ENCODE measurements at regions of chr5 and their contacts with region 1.

Region 1: DNA sequence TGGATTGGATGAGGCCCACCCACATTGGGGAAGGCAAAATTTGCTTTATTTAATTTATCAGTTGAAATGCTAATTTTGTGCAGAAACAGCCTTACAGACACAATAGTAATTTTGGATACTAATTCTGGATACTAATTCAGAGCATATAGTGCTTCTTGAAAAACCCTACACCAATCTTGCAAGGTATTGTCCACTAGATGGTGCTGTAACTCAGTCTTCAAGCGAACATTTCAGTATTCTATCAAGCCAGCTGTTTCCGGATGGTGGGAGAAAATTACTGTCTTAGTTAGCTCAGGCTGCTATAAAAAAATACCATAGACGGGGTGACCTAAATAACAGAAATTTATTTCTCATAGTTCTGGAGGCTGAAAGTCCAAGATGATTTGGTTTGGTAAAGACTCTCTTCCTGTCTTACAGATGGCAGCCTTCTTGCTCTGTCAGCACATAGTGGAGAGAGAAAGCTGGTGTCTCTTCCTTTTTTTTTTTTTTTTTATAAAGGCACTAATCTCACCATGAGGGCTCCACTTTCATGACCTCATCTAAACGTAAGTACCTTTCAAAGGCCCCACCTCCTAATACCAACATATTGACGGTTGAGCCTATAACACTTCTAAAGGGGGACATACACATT is 1306.5 kb upstream of the CDH9 start:
- DNase-seq: no peak
- H3K4me3 Mint-ChIP-seq: no peak overlapping the region
- H3K27ac Mint-ChIP-seq: no peak overlapping the region
- H3K4me1 Mint-ChIP-seq: no peaks in the 10 kb centered on the region
- H3K27me3 Mint-ChIP-seq: no peaks in the 10 kb centered on the region

Region 2: GRCh38 chr5:28216939-28217360 is 128.0 kb before region 1 on chr5:
- CTCF ChIA-PET with region 1: no interaction called
- POLR2A ChIA-PET with region 1: no interaction called
- intact Hi-C with region 1: no loop called
- DNase-seq: no peak
- H3K4me3 Mint-ChIP-seq: no peak overlapping the region
- H3K27ac Mint-ChIP-seq: no peak overlapping the region
- H3K4me1 Mint-ChIP-seq: no peaks in the 10 kb centered on the region
- H3K27me3 Mint-ChIP-seq: no peaks in the 10 kb centered on the region

Region 3: DNA sequence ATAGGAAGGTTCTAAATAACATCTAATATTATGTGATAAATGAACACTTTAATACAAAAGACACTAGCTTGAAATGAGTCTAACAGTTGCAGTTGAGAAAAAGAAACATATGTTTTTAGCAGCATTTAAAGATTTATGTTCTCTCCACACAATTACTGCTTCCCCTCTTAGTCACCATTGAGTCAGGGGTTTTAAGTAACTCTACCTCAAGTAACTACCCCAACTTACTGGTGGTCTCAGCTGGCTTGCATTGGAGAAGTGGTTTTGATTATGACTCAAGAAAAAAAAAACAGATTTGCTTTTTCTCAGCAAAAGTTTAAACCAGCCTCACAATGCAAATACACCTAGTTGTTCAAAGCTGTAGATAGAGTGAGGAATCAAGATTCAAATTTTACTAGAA is 90.1 kb before region 1 on chr5:
- CTCF ChIA-PET with region 1: no interaction called
- POLR2A ChIA-PET with region 1: no interaction called
- intact Hi-C with region 1: no loop called
- DNase-seq: no peak
- H3K4me3 Mint-ChIP-seq: no peak overlapping the region
- H3K27ac Mint-ChIP-seq: no peak overlapping the region
- H3K4me1 Mint-ChIP-seq: no peaks in the 10 kb centered on the region
- H3K27me3 Mint-ChIP-seq: no peaks in the 10 kb centered on the region

Region 4: GRCh38 chr5:28397502-28397941 is 52.6 kb after region 1 on chr5:
- CTCF ChIA-PET with region 1: no interaction called
- POLR2A ChIA-PET with region 1: no interaction called
- intact Hi-C with region 1: no loop called
- DNase-seq: no peak
- H3K4me3 Mint-ChIP-seq: no peak overlapping the region
- H3K27ac Mint-ChIP-seq: no peak overlapping the region
- H3K4me1 Mint-ChIP-seq: no peaks in the 10 kb centered on the region
- H3K27me3 Mint-ChIP-seq: no peaks in the 10 kb centered on the region

Region 5: DNA sequence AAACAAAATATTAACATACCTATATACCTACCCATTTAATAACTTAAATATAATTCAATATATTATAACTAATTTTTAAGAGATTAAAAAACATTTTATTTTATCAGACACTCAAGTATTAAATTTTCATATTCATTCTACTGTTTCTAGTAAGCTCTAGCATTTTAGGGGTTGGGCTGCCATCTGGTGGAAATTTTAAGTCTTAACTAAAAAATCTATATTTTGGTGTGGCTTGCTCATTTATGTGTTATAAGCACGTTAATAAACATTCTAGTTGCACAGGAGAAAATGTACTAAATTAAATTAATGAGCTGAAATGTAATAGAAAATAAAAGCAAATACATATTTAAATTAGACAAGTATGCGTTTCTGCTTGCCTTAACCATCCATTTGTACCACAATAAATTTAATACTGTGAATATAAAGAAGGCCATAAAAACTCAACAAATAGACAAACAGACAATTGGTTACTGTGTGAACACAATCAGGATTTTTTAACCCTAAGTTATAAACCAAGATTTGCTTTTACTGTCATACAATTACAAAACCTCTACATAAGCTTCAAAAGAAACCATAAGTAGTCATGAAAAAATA is 421.7 kb after region 1 on chr5:
- CTCF ChIA-PET with region 1: interaction called, 3 read pairs
- POLR2A ChIA-PET with region 1: no interaction called
- intact Hi-C with region 1: loop called (anchors 10 kb)
- DNase-seq: no peak
- H3K4me3 Mint-ChIP-seq: no peak overlapping the region
- H3K27ac Mint-ChIP-seq: no peak overlapping the region
- H3K4me1 Mint-ChIP-seq: no peaks in the 10 kb centered on the region
- H3K27me3 Mint-ChIP-seq: no peaks in the 10 kb centered on the region

Measured in activated CD4-positive, alpha-beta memory T cell treated with anti-CD3 and anti-CD28 coated beads for 36 hours (primary cell).